ENCODE measurements at regions of chr9 and their contacts with region 1.

Region 1: DNA sequence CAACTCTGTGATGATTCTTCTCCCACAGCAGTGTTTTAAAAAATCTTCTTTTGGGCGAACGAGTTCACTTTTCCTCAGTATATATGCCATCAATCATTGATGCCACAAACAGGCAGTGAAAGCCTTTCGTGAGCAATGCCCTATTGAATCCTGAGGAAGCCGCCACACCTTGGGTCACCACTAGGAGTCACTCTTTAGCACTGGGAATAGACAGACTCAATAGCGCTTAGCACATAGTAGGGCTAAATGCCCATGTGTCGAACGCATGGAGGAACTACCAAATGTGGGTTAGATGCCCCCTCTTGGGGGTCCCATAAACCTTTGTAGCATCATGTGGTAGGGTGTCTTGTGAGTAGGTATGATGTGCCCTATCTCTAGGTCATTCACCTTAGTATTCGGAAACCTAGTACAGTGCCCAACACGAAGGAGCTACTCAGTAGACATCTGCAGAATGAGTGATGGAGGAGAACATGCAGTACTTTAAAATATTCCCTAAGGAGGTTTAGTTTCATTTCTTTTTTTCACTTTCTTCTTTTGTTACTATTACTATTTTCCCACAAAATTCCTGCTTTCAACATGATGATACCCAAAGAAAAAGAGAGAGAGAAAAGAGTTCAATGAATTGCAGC is 603.7 kb downstream of the BNC2 start:
- DNase-seq: peak in 1 of 2 experiments; percentile 86
- H3K4me3 ChIP-seq: no peak overlapping the region
- H3K27ac ChIP-seq: no peak overlapping the region
- H3K4me1 ChIP-seq: peaks cover 0 to 3% (median 0%) of the 10 kb centered on the region in 4 experiments; a peak in 2 of 7 replicates
- H3K27me3 ChIP-seq: no peaks in the 10 kb centered on the region
- CTCF ChIP-seq: peak; percentile 68 to 94 (median 77)
- EP300 ChIP-seq: no peak
- POLR2A ChIP-seq: no peak
- RAD21 ChIP-seq: peak; percentile 81 to 84

Region 2: DNA sequence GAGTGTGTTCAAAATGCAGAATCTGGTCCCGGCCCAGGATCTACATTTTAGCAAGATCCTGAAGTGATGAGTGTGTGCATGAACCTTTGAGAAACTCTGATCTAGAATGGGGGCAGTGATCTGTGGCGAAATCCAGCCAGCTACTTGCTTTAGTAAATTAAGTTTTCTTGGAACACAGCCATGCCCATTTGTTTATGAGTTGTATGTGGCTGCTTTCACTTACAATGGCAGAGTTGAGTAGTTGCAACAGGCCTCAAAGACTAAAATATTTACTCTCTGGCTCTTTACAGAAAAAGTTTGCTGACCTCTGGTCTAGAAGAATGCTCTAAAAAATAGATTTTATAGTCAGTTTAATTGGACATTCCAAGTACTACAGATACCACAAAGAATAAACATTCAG is 15.5 kb after region 1 on chr9:
- CTCF ChIA-PET with region 1: interaction called, 21 read pairs
- POLR2A ChIA-PET with region 1: no interaction called
- DNase-seq: no peak
- H3K4me3 ChIP-seq: no peak overlapping the region
- H3K27ac ChIP-seq: no peak overlapping the region
- H3K4me1 ChIP-seq: no peaks in the 10 kb centered on the region
- H3K27me3 ChIP-seq: no peaks in the 10 kb centered on the region
- CTCF ChIP-seq: no peak
- EP300 ChIP-seq: no peak
- POLR2A ChIP-seq: no peak
- RAD21 ChIP-seq: no peak